ENCODE measurements at regions of chr6 and their contacts with region 1.

Region 1: DNA sequence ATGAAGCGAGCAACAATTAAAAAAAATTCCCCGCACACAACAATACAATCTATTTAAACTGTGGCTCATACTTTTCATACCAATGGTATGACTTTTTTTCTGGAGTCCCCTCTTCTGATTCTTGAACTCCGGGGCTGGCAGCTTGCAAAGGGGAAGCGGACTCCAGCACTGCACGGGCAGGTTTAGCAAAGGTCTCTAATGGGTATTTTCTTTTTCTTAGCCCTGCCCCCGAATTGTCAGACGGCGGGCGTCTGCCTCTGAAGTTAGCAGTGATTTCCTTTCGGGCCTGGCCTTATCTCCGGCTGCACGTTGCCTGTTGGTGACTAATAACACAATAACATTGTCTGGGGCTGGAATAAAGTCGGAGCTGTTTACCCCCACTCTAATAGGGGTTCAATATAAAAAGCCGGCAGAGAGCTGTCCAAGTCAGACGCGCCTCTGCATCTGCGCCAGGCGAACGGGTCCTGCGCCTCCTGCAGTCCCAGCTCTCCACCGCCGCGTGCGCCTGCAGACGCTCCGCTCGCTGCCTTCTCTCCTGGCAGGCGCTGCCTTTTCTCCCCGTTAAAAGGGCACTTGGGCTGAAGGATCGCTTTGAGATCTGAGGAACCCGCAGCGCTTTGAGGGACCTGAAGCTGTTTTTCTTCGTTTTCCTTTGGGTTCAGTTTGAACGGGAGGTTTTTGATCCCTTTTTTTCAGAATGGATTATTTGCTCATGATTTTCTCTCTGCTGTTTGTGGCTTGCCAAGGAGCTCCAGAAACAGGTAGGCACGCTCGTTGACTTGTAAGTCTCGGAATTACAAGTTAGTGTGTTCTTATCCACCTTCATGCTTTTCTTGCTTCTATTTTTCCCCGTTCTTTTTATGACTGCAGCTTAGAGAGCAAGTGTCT is at the start of gene EDN1:
- DNase-seq: peak; percentile 30 to 92 (median 77)

Region 2: DNA sequence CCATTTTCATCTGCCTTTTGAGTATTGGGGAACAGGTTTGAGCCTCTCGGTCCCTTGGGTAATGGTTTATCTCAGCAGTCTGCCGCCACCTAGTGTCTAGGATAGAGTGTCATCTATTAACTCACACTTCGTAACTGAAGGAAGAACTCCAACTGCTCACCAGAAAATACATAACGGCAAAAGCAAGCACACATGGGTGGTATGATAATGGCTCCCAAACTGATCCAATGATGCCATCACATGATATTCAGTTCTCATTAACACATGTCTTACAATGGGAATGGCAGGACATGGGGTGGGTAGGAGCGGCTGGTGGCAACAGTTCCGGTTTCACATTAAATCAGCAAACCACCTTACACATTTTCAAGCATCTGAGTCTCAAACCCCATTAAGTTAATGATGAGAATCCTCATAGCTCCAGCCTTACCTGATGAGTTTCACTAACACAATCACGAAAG is 315.7 kb after region 1 on chr6:
- intact Hi-C with region 1: loop called (anchors 10 kb)
- DNase-seq: peak in 40 of 42 donors; percentile 18 to 84 (median 53)

Measured in head of caudate nucleus (tissue), 42 donors.